ENCODE measurements at regions of chr17 and their contacts with region 1.

Region 1: GRCh38 chr17:17849845-17850373 is 13.1 kb upstream of the SREBF1 start:
- DNase-seq: peak; percentile 35 to 92 (median 72)
- ATAC-seq: peak; percentile 76
- H3K4me3 ChIP-seq: peak overlapping the region in 1 of 2 experiments; percentile 17
- H3K4me3 Mint-ChIP-seq: peak overlapping the region; percentile 66
- H3K27ac ChIP-seq: peak overlapping the region; percentile 60 to 93
- H3K27ac Mint-ChIP-seq: peak overlapping the region; percentile 96
- H3K4me1 ChIP-seq: peaks cover 70% of the 10 kb centered on the region
- H3K4me1 Mint-ChIP-seq: peaks cover 71% of the 10 kb centered on the region
- H3K27me3 ChIP-seq: no peaks in the 10 kb centered on the region
- H3K27me3 Mint-ChIP-seq: no peaks in the 10 kb centered on the region
- CTCF ChIP-seq: no peak

Region 2: GRCh38 chr17:17613708-17614114 is 236.2 kb before region 1 on chr17:
- CTCF ChIA-PET with region 1: no interaction called
- POLR2A ChIA-PET with region 1: no interaction called
- intact Hi-C with region 1: no loop called
- DNase-seq: peak in 8 of 9 experiments; percentile 14 to 70 (median 48)
- ATAC-seq: peak; percentile 94
- H3K4me3 ChIP-seq: no peak overlapping the region
- H3K4me3 Mint-ChIP-seq: no peak overlapping the region
- H3K27ac ChIP-seq: no peak overlapping the region
- H3K27ac Mint-ChIP-seq: no peak overlapping the region
- H3K4me1 ChIP-seq: no peaks in the 10 kb centered on the region
- H3K4me1 Mint-ChIP-seq: no peaks in the 10 kb centered on the region
- H3K27me3 ChIP-seq: no peaks in the 10 kb centered on the region
- H3K27me3 Mint-ChIP-seq: no peaks in the 10 kb centered on the region
- CTCF ChIP-seq: peak; percentile 64

Region 3: GRCh38 chr17:17783116-17783824 is 66.6 kb before region 1 on chr17:
- CTCF ChIA-PET with region 1: interaction called, 4 read pairs
- POLR2A ChIA-PET with region 1: no interaction called
- intact Hi-C with region 1: loop called in 1 of 2 experiments (anchors 2 kb)
- DNase-seq: peak; percentile 24 to 79 (median 65)
- ATAC-seq: peak; percentile 58
- H3K4me3 ChIP-seq: peak overlapping the region; percentile 50 to 54
- H3K4me3 Mint-ChIP-seq: peak overlapping the region; percentile 85
- H3K27ac ChIP-seq: peak overlapping the region in 1 of 2 experiments; percentile 36
- H3K27ac Mint-ChIP-seq: peak overlapping the region; percentile 41
- H3K4me1 ChIP-seq: peaks cover 30% of the 10 kb centered on the region
- H3K4me1 Mint-ChIP-seq: peaks cover 30% of the 10 kb centered on the region
- H3K27me3 ChIP-seq: peaks cover 0 to 4% of the 10 kb centered on the region in 2 experiments
- H3K27me3 Mint-ChIP-seq: no peaks in the 10 kb centered on the region
- CTCF ChIP-seq: peak; percentile 26

Region 4: GRCh38 chr17:17823433-17824118 is 26.3 kb before region 1 on chr17:
- CTCF ChIA-PET with region 1: interaction called, 7 read pairs
- POLR2A ChIA-PET with region 1: interaction called, 8 read pairs
- intact Hi-C with region 1: loop called (anchors 1 kb)
- DNase-seq: peak; percentile 63 to 92 (median 80)
- ATAC-seq: peak; percentile 87
- H3K4me3 ChIP-seq: peak overlapping the region; percentile 46 to 55
- H3K4me3 Mint-ChIP-seq: peak overlapping the region; percentile 81
- H3K27ac ChIP-seq: peak overlapping the region; percentile 50 to 85
- H3K27ac Mint-ChIP-seq: peak overlapping the region; percentile 95
- H3K4me1 ChIP-seq: peaks cover 95% of the 10 kb centered on the region
- H3K4me1 Mint-ChIP-seq: peaks cover 91% of the 10 kb centered on the region
- H3K27me3 ChIP-seq: no peaks in the 10 kb centered on the region
- H3K27me3 Mint-ChIP-seq: no peaks in the 10 kb centered on the region
- CTCF ChIP-seq: no peak

Region 5: GRCh38 chr17:17836250-17836817 is 13.6 kb before region 1 on chr17:
- CTCF ChIA-PET with region 1: interaction called, 7 read pairs
- POLR2A ChIA-PET with region 1: interaction called, 29 read pairs
- intact Hi-C with region 1: loop called (anchors 1 kb)
- DNase-seq: peak; percentile 94 to 99 (median 97)
- ATAC-seq: peak; percentile 72
- H3K4me3 ChIP-seq: peak overlapping the region; percentile 87 to 95
- H3K4me3 Mint-ChIP-seq: peak overlapping the region; percentile 88
- H3K27ac ChIP-seq: peak overlapping the region; percentile 99
- H3K27ac Mint-ChIP-seq: peak overlapping the region; percentile 97
- H3K4me1 ChIP-seq: peaks cover 82% of the 10 kb centered on the region
- H3K4me1 Mint-ChIP-seq: peaks cover 75% of the 10 kb centered on the region
- H3K27me3 ChIP-seq: no peaks in the 10 kb centered on the region
- H3K27me3 Mint-ChIP-seq: no peaks in the 10 kb centered on the region
- CTCF ChIP-seq: no peak

Region 6: GRCh38 chr17:17859909-17860765 is 10.2 kb after region 1 on chr17:
- CTCF ChIA-PET with region 1: interaction called, 17 read pairs
- POLR2A ChIA-PET with region 1: no interaction called
- intact Hi-C with region 1: loop called in 1 of 2 experiments (anchors 1 kb)
- DNase-seq: peak; percentile 45 to 84 (median 71)
- ATAC-seq: peak; percentile 98
- H3K4me3 ChIP-seq: no peak overlapping the region
- H3K4me3 Mint-ChIP-seq: no peak overlapping the region
- H3K27ac ChIP-seq: no peak overlapping the region
- H3K27ac Mint-ChIP-seq: no peak overlapping the region
- H3K4me1 ChIP-seq: peaks cover 44% of the 10 kb centered on the region
- H3K4me1 Mint-ChIP-seq: peaks cover 38% of the 10 kb centered on the region
- H3K27me3 ChIP-seq: no peaks in the 10 kb centered on the region
- H3K27me3 Mint-ChIP-seq: no peaks in the 10 kb centered on the region
- CTCF ChIP-seq: peak; percentile 93